ENCODE measurements at regions of chr5 and their contacts with region 1.

Region 1: GRCh38 chr5:129767906-129768380 is 20.0 kb downstream of the MINAR2 start:
- DNase-seq: peak in 1 of 2 donors; percentile 19
- ATAC-seq: peak; percentile 79 to 96 (median 92)
- H3K4me3 ChIP-seq: no peak overlapping the region
- H3K27ac ChIP-seq: no peak overlapping the region
- H3K4me1 ChIP-seq: peaks cover 3% of the 10 kb centered on the region
- H3K27me3 ChIP-seq: no peaks in the 10 kb centered on the region
- CTCF ChIP-seq: peak; percentile 97

Region 2: GRCh38 chr5:128905571-128906110 is 862.3 kb before region 1 on chr5:
- intact Hi-C with region 1: loop called (anchors 5 kb)
- DNase-seq: no peak
- ATAC-seq: peak in 3 of 4 donors; percentile 67 to 73 (median 71)
- H3K4me3 ChIP-seq: no peak overlapping the region
- H3K27ac ChIP-seq: no peak overlapping the region
- H3K4me1 ChIP-seq: no peaks in the 10 kb centered on the region
- H3K27me3 ChIP-seq: no peaks in the 10 kb centered on the region
- CTCF ChIP-seq: peak; percentile 82

Region 3: GRCh38 chr5:129172580-129172979 is 595.4 kb before region 1 on chr5:
- intact Hi-C with region 1: loop called (anchors 2 to 10 kb)
- DNase-seq: no peak
- ATAC-seq: no peak
- H3K4me3 ChIP-seq: no peak overlapping the region
- H3K27ac ChIP-seq: no peak overlapping the region
- H3K4me1 ChIP-seq: no peaks in the 10 kb centered on the region
- H3K27me3 ChIP-seq: no peaks in the 10 kb centered on the region
- CTCF ChIP-seq: no peak

Region 4: DNA sequence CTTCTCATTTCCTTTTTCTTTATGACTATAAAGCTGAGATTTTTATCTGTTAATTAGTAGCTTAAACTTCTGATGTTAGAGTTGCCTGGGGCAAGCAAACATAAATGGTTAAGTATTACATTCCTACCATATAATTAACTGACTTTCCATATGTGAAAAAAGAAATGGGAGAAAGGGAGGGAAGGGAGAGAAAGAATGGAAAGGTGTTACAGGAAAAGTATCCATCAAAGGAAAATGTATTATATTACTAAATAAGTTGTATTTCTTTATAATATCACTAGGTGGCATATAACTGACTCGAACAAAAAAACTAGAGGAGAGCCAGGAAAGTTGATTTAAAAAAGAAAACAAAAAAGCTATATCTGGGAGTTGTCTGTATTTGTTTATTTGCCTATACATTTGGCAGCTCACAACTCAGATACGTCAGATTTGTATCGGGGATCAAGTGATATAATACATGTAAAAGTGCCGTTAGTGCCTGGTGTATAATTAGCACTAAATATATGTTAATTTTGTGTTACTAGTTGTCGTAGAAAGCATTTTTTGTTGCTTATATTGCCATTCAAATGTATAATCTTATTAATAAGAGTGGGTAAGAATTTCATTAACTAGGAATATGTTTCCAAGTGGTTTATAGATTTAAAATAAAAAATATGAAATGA is 367.5 kb before region 1 on chr5:
- intact Hi-C with region 1: loop called (anchors 10 kb)
- DNase-seq: no peak
- ATAC-seq: no peak
- H3K4me3 ChIP-seq: no peak overlapping the region
- H3K27ac ChIP-seq: no peak overlapping the region
- H3K4me1 ChIP-seq: no peaks in the 10 kb centered on the region
- H3K27me3 ChIP-seq: no peaks in the 10 kb centered on the region
- CTCF ChIP-seq: peak; percentile 26

Region 5: GRCh38 chr5:129852747-129853352 is 84.9 kb after region 1 on chr5:
- intact Hi-C with region 1: loop called (anchors 2 to 5 kb)
- DNase-seq: peak; percentile 67 to 83
- ATAC-seq: peak in 3 of 4 donors; percentile 63 to 87 (median 80)
- H3K4me3 ChIP-seq: no peak overlapping the region
- H3K27ac ChIP-seq: no peak overlapping the region
- H3K4me1 ChIP-seq: no peaks in the 10 kb centered on the region
- H3K27me3 ChIP-seq: no peaks in the 10 kb centered on the region
- CTCF ChIP-seq: peak; percentile 85

Region 6: DNA sequence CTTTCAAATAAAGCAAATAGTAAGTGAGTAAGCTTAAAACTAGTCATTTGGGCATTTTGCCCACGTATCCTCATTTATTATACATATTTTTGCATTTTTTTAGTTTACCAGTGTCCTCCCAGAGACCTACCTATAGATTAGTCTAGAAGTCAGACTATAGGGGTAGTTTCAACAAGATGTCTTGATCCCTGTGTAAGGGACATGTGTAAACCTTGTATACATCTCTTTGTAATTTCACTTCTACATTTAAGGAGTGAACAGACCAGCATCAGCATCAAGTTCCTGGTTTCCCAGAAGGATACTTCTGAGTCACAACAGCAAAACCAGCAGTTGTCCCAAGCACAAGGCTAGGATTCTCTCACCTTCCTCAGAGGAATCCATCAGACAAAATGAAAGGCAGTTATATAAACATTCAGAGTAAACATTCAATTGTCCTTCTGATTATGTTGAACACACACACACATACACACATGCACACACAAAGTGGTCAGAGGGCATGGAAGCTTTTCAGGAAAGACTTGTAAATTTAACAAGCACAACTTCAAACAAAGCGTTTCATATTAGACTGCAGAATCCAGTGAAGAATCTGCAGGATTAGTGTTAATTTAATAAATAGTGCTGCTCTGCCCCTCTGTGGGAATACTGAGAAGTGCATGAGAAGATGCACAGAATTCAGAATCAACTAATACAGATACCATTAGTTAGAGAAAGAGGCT is 1341.8 kb after region 1 on chr5:
- intact Hi-C with region 1: loop called in 1 of 2 experiments (anchors 5 kb)
- DNase-seq: no peak
- ATAC-seq: peak in 1 of 4 donors; percentile 65
- H3K4me3 ChIP-seq: no peak overlapping the region
- H3K27ac ChIP-seq: no peak overlapping the region
- H3K4me1 ChIP-seq: no peaks in the 10 kb centered on the region
- H3K27me3 ChIP-seq: no peaks in the 10 kb centered on the region
- CTCF ChIP-seq: peak; percentile 69